ENCODE measurements at regions of chr7 and their contacts with region 1.

Region 1: GRCh38 chr7:132580717-132581285 is 4.5 kb upstream of the PLXNA4 start:
- DNase-seq: peak; percentile 73 to 76
- ATAC-seq: peak; percentile 74 to 85 (median 78)
- H3K4me3 ChIP-seq: no peak overlapping the region
- H3K27ac ChIP-seq: no peak overlapping the region
- H3K4me1 ChIP-seq: peaks cover 4% of the 10 kb centered on the region
- H3K27me3 ChIP-seq: peaks cover 0 to 10% (median 4%) of the 10 kb centered on the region in 3 donors
- CTCF ChIP-seq: peak; percentile 71

Region 2: GRCh38 chr7:131692131-131692960 is 888.5 kb before region 1 on chr7:
- intact Hi-C with region 1: loop called (anchors 10 kb)
- DNase-seq: peak; percentile 39 to 60
- ATAC-seq: peak in 3 of 4 donors; percentile 65 to 70 (median 65)
- H3K4me3 ChIP-seq: no peak overlapping the region
- H3K27ac ChIP-seq: no peak overlapping the region
- H3K4me1 ChIP-seq: no peaks in the 10 kb centered on the region
- H3K27me3 ChIP-seq: peaks cover 0 to 30% (median 3%) of the 10 kb centered on the region in 3 donors
- CTCF ChIP-seq: peak; percentile 65

Region 3: GRCh38 chr7:132009778-132010177 is 571.0 kb before region 1 on chr7:
- intact Hi-C with region 1: no loop called
- DNase-seq: no peak
- ATAC-seq: no peak
- H3K4me3 ChIP-seq: no peak overlapping the region
- H3K27ac ChIP-seq: no peak overlapping the region
- H3K4me1 ChIP-seq: no peaks in the 10 kb centered on the region
- H3K27me3 ChIP-seq: no peaks in the 10 kb centered on the region
- CTCF ChIP-seq: no peak

Region 4: GRCh38 chr7:132318352-132319318 is 262.2 kb before region 1 on chr7:
- intact Hi-C with region 1: loop called (anchors 1 to 2 kb)
- DNase-seq: peak; percentile 87 to 92
- ATAC-seq: peak; percentile 92 to 98 (median 92)
- H3K4me3 ChIP-seq: no peak overlapping the region
- H3K27ac ChIP-seq: no peak overlapping the region
- H3K4me1 ChIP-seq: no peaks in the 10 kb centered on the region
- H3K27me3 ChIP-seq: peaks cover 0 to 11% (median 6%) of the 10 kb centered on the region in 3 donors
- CTCF ChIP-seq: peak; percentile 89

Region 5: GRCh38 chr7:132394283-132395198 is 186.3 kb before region 1 on chr7:
- intact Hi-C with region 1: loop called (anchors 5 to 10 kb)
- DNase-seq: no peak
- ATAC-seq: peak in 2 of 4 donors; percentile 30 to 48
- H3K4me3 ChIP-seq: no peak overlapping the region
- H3K27ac ChIP-seq: no peak overlapping the region
- H3K4me1 ChIP-seq: no peaks in the 10 kb centered on the region
- H3K27me3 ChIP-seq: no peaks in the 10 kb centered on the region
- CTCF ChIP-seq: peak; percentile 30

Region 6: GRCh38 chr7:132464746-132465145 is 116.1 kb before region 1 on chr7:
- intact Hi-C with region 1: no loop called
- DNase-seq: peak in 1 of 2 donors; percentile 22
- ATAC-seq: peak; percentile 54 to 84 (median 68)
- H3K4me3 ChIP-seq: no peak overlapping the region
- H3K27ac ChIP-seq: no peak overlapping the region
- H3K4me1 ChIP-seq: no peaks in the 10 kb centered on the region
- H3K27me3 ChIP-seq: no peaks in the 10 kb centered on the region
- CTCF ChIP-seq: no peak

Region 7: DNA sequence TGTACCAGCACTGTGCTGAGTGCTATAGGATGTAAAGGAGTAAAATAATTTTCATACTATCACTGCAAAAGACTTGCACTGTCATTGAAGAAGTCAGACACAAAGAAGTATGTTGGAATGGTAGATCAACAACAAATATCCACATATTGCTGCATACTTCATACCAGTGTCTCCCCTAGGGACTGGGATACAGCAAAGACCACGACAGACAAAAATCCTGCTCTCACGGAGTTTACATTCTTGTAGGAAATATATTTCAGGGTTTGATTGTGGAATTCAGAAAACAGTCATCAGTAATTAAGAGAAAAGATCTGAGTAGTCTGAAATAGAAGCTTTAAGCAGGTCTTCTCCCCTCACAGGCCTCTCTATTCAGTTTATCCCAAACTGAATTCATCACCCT is 44.9 kb after region 1 on chr7:
- intact Hi-C with region 1: no loop called
- DNase-seq: no peak
- ATAC-seq: no peak
- H3K4me3 ChIP-seq: no peak overlapping the region
- H3K27ac ChIP-seq: no peak overlapping the region
- H3K4me1 ChIP-seq: no peaks in the 10 kb centered on the region
- H3K27me3 ChIP-seq: no peaks in the 10 kb centered on the region
- CTCF ChIP-seq: no peak

Region 8: DNA sequence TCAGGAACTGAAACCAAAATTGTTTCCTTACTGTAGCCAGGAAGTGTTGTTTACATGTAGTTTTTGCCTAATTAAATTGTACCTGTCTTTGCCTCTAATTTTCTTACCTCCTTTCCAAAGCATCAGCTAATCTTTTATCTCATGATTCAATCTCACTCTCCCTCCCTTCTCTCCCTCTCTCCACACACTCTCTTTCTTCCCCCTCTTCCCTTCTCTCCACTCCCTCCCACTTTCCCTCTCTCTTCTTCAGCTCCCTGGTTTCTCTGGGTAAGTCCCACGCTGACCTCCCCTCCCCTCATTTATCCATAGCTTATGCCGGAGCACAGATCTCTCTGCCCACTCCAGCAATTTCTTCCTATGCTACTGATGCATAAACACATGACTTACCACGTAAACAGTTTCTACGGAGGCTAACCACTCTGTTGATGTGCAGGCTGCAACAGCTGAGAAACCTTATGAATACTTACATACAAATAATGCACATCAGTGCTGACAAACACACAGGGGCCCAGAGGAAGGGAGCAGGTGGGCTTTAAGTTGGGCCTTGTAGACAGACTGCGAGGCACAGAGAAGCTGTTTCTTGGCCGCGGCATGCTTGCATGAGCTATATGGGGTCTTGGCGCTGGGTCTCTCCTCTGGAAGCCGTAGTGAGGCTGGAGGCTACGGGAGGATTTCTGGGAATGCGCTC is 169.9 kb after region 1 on chr7:
- intact Hi-C with region 1: no loop called
- DNase-seq: no peak
- ATAC-seq: no peak
- H3K4me3 ChIP-seq: no peak overlapping the region
- H3K27ac ChIP-seq: no peak overlapping the region
- H3K4me1 ChIP-seq: no peaks in the 10 kb centered on the region
- H3K27me3 ChIP-seq: no peaks in the 10 kb centered on the region
- CTCF ChIP-seq: no peak